Activated B cell treated with CpG ODN at 0.5 μM for 24 hours (primary cell): ENCODE measurements at regions of chr17 and their contacts with region 1.

Region 1: DNA sequence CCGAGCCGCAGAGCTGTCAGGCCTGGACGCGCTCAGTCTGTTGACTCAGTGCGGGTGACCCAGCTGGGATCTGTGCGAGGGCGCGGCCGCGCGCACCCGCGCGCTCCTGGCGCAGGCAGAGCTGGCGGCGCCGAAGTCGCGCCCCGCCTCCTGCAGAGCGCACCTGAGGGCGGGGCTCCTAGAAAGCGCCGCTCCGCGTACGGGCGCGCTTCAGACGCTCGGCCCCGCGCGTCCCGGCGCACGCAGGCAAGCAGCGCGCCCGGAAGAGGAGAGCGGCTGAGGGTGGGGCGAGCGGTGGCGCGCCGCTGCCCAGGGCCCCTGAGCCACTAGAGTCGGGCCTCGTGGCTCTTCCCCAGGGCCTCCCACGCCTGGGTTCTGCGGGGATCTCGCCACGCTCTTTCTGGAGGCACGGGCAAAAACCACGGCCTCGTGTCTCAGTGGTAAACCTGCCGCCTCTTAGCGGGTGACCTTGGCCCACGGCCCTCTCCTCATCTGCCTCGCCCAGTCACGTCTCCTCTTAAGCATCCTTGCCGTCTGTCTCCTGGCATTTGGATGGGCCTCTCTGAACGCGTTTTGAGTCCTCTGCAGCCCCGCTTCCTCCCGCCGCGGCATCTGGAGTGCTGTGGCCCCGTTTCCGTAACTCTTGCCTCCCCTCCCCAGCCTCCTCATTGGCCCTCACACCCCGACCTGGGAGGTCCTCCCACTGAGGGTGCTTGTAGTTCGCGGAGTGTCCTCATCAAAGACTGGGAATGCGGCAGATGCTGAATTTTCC is at the start of gene ABCA5:
- DNase-seq: peak; percentile 88
- ATAC-seq: peak; percentile 91
- H3K4me3 Mint-ChIP-seq: peak within 1 kb of the TSS; percentile 98
- H3K27ac Mint-ChIP-seq: peak within 1 kb of the TSS; percentile 97
- H3K4me1 Mint-ChIP-seq: peaks cover 27% of the 10 kb centered on the region
- H3K27me3 Mint-ChIP-seq: peaks cover 9% of the 10 kb centered on the region
- CTCF ChIP-seq: no peak
- total RNA-seq, gene ABCA5: 24.2 and 30.3 TPM in 2 replicates

Region 2: DNA sequence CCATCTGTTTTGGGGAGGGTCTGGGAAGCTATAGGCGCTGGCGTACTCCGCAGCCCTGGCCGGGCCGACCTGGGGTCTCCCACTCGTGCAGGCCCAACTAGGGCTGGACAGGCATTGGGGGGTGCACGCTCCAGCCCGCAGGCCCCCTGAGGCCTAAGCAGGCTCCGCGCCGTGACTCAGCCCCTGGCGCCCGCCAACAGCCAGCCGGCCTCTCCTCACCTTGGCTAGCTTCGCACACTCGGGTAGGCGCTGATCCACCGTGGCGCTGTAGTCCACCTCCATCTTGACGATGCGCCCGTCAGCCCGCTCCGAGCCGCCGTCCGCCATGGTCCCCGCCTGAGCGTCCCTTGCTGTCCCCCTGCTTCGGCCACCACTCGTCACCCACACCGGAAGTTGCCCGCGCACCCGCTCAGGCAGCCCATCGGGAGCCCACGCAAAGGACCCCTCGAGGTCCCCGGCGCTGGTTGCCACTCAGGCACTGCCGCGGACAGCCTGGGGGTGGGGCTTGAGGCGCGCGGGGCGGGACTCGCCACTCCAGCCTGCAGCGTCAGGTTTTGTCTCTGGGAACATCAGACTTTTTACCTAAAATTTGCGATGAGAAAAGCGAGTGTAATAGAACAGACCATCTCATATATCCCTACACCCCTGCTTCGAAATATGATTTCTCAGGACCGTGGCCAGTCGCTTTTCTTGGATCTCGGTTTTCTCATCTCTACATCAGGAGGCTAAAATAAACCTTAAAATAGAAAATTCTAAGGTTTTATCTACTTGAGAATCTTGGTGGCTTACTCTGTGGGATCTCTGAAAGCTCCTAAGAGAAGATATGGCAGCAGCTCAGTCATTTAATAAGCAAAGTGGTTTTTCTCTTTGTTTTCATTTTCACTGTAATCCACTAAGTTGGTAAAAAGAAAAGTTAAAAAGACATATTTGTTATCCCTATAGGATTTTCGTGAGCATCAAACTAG is 1960.8 kb before region 1 on chr17 and contains the start of gene PSMD12:
- CTCF ChIA-PET with region 1: no interaction called
- POLR2A ChIA-PET with region 1: no interaction called
- intact Hi-C with region 1: loop called (anchors 2 kb)
- DNase-seq: peak; percentile 94
- ATAC-seq: peak; percentile 98
- H3K4me3 Mint-ChIP-seq: peak within 1 kb of the TSS; percentile 91
- H3K27ac Mint-ChIP-seq: peak within 1 kb of the TSS; percentile 87
- H3K4me1 Mint-ChIP-seq: peaks cover 40% of the 10 kb centered on the region
- H3K27me3 Mint-ChIP-seq: no peaks in the 10 kb centered on the region
- CTCF ChIP-seq: no peak
- total RNA-seq, gene PSMD12: 47.3 and 54.6 TPM in 2 replicates

Region 3: DNA sequence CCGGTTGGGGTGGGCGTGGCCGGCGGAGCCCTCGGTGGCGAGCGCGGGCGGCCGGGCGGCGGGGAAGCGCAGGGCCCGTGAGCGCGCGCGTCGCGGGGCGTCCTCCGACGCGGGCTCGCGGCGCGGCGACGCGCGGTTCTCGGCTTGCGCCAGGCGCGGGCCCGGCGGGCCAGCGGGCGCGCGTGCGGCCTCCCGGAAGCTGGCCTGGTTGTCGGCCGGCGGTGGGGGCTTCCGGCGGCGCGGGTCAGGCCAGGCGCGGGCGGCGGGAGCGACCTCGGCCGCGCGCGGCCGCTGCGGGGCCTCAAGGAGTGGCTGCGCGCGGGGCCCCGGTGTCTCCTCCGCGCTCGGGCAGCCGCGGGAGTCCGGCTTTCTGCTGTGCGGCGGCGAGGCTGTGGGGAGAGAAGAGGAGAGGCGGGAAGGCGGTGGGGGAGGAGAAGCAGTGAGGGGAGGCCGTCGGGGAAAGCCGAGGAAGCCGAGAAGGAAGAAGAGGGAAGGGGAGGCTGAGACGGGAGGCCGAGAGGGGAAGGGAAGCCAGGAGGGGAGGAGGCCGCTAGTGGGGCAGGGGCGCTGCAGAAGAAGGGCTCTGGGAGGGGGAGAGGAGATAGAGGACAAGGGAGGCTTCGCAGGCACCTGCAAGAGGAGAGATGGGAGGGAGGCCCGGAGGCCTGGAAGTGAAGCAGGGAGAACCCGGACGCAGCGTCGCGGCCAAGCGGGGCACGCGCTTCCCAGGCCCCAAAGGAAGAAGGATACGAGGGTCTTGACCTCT is 1333.5 kb before region 1 on chr17:
- CTCF ChIA-PET with region 1: no interaction called
- POLR2A ChIA-PET with region 1: no interaction called
- intact Hi-C with region 1: loop called (anchors 1 kb)
- DNase-seq: peak; percentile 75
- ATAC-seq: peak; percentile 81
- H3K4me3 Mint-ChIP-seq: peak overlapping the region; percentile 88
- H3K27ac Mint-ChIP-seq: peak overlapping the region; percentile 82
- H3K4me1 Mint-ChIP-seq: peaks cover 34% of the 10 kb centered on the region
- H3K27me3 Mint-ChIP-seq: peaks cover 18% of the 10 kb centered on the region
- CTCF ChIP-seq: no peak

Region 4: DNA sequence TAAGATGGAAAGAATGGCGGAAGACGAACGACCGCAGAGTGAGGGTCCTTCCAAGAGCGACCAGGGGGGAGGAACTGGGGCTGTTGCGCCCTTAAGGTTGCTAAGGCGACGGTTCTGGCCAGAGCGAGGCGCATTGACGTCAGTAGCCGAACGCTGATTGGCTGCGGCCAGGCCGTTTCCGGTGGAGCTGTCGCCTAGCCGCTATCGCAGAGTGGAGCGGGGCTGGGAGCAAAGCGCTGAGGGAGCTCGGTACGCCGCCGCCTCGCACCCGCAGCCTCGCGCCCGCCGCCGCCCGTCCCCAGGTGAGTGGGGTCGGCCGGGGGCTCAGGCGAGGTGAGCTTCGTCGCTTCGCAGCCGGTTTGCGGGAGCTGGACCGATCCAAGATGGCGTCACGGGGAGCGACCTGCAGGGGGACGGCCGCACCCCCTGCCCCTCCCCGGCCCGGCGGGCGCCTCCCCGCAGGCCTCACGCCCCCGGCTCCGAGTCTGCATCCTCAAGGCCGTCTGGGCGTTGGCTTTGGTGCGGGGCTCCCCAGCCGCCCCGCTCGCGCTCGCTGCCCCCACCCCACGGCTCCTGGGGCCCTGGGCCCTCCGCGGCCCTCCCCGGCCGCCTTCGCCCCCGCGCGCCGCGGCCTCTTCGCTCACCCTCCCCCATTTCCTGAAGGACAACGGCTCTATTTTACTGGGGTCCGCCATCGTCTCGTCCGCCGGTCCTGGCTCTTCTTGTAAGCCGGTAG is 814.8 kb before region 1 on chr17 and contains the start of gene PRKAR1A:
- CTCF ChIA-PET with region 1: no interaction called
- POLR2A ChIA-PET with region 1: no interaction called
- intact Hi-C with region 1: loop called (anchors 1 kb)
- DNase-seq: peak; percentile 92
- ATAC-seq: peak; percentile 77
- H3K4me3 Mint-ChIP-seq: peak within 1 kb of the TSS; percentile 100
- H3K27ac Mint-ChIP-seq: peak within 1 kb of the TSS; percentile 100
- H3K4me1 Mint-ChIP-seq: peaks cover 39% of the 10 kb centered on the region
- H3K27me3 Mint-ChIP-seq: no peaks in the 10 kb centered on the region
- CTCF ChIP-seq: no peak
- total RNA-seq, gene PRKAR1A: 272 and 279 TPM in 2 replicates

Region 5: GRCh38 chr17:69123626-69124025 is 203.6 kb before region 1 on chr17:
- CTCF ChIA-PET with region 1: no interaction called
- POLR2A ChIA-PET with region 1: no interaction called
- intact Hi-C with region 1: no loop called
- DNase-seq: no peak
- ATAC-seq: no peak
- H3K4me3 Mint-ChIP-seq: no peak overlapping the region
- H3K27ac Mint-ChIP-seq: no peak overlapping the region
- H3K4me1 Mint-ChIP-seq: peaks cover 9% of the 10 kb centered on the region
- H3K27me3 Mint-ChIP-seq: no peaks in the 10 kb centered on the region
- CTCF ChIP-seq: no peak

Region 6: DNA sequence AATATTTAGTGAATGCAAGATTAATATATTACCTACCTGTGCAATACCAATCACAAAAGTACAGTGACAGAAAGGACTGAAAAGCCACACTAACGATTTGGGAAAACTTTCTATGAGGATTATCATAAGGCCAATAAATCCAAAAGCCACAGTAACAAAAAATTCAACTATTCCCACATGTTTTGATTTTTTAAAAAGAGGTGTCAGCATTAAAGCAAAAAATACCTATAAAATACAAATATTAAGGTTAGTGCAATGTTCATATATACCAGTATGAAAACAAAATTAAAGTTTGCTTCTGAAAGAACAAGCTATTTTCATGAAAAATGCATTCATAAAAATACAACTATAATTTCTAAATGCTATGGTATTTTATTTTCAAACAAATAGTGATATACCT is 24.6 kb before region 1 on chr17:
- CTCF ChIA-PET with region 1: no interaction called
- POLR2A ChIA-PET with region 1: no interaction called
- intact Hi-C with region 1: no loop called
- DNase-seq: no peak
- ATAC-seq: no peak
- H3K4me3 Mint-ChIP-seq: no peak overlapping the region
- H3K27ac Mint-ChIP-seq: no peak overlapping the region
- H3K4me1 Mint-ChIP-seq: no peaks in the 10 kb centered on the region
- H3K27me3 Mint-ChIP-seq: no peaks in the 10 kb centered on the region
- CTCF ChIP-seq: no peak

Region 7: GRCh38 chr17:69414408-69415274 is 87.4 kb after region 1 on chr17 and contains the start of gene MAP2K6:
- CTCF ChIA-PET with region 1: no interaction called
- POLR2A ChIA-PET with region 1: interaction called, 9 read pairs
- intact Hi-C with region 1: loop called (anchors 1 kb)
- DNase-seq: peak; percentile 63
- ATAC-seq: peak; percentile 99
- H3K4me3 Mint-ChIP-seq: no peak within 1 kb of the TSS
- H3K27ac Mint-ChIP-seq: no peak within 1 kb of the TSS
- H3K4me1 Mint-ChIP-seq: peaks cover 4% of the 10 kb centered on the region
- H3K27me3 Mint-ChIP-seq: no peaks in the 10 kb centered on the region
- CTCF ChIP-seq: no peak
- total RNA-seq, gene MAP2K6: 2.6 and 2.9 TPM in 2 replicates

Region 8: GRCh38 chr17:69516911-69517310 is 189.7 kb after region 1 on chr17:
- CTCF ChIA-PET with region 1: no interaction called
- POLR2A ChIA-PET with region 1: interaction called, 5 read pairs
- intact Hi-C with region 1: loop called (anchors 1 kb)
- DNase-seq: no peak
- ATAC-seq: peak; percentile 91
- H3K4me3 Mint-ChIP-seq: peak overlapping the region; percentile 48
- H3K27ac Mint-ChIP-seq: peak overlapping the region; percentile 46
- H3K4me1 Mint-ChIP-seq: peaks cover 33% of the 10 kb centered on the region
- H3K27me3 Mint-ChIP-seq: peaks cover 17% of the 10 kb centered on the region
- CTCF ChIP-seq: no peak

Region 9: DNA sequence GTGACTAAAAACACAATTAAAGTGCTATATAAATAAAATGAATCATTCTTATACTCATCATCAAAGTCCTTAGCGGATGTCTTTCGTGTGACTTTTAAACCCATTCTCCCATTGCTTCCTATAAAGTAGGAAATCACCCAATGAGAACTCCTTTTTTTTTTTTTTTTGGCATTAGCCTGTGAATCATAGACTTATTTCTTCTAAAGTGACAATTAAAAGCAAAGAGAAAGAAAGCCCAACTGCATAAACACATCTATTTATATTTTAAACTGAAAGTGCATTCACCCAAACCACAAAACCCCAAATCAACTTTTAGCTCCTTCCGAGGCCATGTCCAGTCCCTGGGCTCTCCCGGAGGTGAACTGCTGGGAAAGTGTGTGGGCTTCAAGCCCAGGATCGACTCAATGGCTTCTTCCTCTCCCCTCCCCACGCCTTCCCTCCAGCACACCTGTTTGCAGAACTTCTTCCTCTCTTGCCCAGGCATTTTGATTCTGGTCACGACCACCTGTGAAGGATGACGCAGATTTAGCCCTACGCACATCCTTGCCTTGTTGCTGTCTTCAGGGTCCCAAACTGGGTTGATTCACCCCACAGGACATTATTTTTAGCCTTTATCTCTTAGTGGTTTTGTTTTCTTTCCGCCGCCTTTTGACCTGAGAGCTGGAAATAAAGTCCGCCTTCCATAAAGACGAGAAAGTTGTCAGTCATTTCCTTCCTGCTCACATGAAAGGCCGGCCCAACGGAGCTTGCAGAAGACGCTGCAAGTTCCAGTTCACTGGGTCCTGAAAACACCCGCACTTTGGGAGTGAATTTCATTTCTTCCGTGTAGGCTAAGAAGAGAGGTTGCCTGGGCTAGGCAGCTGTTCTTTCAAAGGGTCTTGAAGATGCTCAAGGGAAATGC is 254.1 kb after region 1 on chr17:
- CTCF ChIA-PET with region 1: no interaction called
- POLR2A ChIA-PET with region 1: no interaction called
- intact Hi-C with region 1: loop called (anchors 1 kb)
- DNase-seq: peak; percentile 40
- ATAC-seq: peak; percentile 86
- H3K4me3 Mint-ChIP-seq: peak overlapping the region; percentile 71
- H3K27ac Mint-ChIP-seq: peak overlapping the region; percentile 80
- H3K4me1 Mint-ChIP-seq: peaks cover 34% of the 10 kb centered on the region
- H3K27me3 Mint-ChIP-seq: peaks cover 6% of the 10 kb centered on the region
- CTCF ChIP-seq: no peak